ENCODE measurements at regions of chr3 and their contacts with region 1.

Region 1: DNA sequence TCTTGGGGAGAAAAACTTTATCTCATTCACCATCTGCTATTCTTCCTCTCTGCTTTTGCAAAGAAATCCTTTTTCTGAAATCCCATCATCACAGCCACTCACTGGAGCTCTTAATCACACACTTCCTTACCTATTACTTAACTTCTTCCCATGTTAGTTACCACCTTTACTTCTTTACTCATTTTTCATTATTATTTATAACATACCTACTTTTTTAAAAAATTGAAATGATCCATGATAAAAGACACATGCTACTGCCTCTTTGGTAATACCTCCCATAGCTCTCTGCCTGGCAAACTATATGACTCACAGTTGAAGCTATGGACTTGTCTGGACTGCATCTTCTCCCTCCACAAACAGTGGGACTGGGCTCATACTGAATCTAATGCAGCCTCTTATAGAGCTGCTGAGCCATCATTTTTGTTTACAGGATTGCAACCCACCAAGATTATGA is 150.3 kb downstream of the TNIK start:
- DNase-seq: no peak
- ATAC-seq: no peak

Region 2: GRCh38 chr3:171187706-171188290 is 122.1 kb before region 1 on chr3:
- intact Hi-C with region 1: loop called (anchors 10 kb)
- DNase-seq: no peak
- ATAC-seq: peak; percentile 74

Region 3: GRCh38 chr3:171257251-171258203 is 52.4 kb before region 1 on chr3:
- intact Hi-C with region 1: no loop called
- DNase-seq: no peak
- ATAC-seq: peak; percentile 38

Measured in left ventricle myocardium superior (tissue), 1 donor.